IMR-90 (cell line): ENCODE measurements at regions of chr4 and their contacts with region 1.

Region 1: DNA sequence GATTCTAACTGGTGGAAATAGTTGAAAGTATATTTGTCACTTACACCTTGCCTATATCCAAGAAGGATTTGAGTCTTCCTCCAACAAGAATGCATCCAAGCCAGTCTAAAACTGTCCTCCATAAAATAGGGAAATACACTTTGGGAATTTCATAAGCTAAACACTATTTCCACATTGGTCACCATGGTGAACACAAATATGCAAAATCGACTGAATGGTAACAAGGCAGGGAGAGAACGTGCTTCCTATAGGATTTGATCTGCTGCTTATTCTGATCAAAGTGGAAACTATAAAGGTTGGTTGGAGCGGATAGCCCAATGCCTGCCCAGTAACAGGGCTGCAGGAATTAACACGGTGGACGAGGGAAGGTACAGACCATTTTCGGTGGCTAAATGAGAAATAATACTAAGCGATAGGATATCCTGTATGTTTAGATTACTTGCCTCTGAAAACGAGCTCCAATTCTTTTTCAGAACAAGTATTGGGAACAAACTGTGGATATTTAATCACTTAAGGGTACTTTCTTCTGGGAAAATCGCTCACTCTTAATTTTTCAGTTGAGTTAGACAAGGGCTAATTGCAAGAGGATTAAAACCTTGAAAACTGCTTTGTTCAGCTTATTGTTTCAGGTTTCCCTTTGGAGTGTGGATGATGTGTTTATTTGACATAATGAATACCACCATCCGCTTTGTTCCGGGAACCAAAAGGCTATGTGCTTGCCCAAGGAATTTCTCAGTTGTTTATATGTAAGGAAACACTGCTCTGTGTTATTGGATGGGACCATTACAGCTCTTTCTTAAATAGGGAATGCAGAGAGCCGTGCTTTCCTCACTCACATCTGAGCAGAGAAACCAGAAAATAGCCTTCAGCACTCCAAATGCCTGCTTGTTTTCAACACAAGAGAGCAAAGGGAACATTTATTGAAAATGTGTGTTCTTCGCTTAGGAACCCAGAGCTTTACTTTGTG is 194.4 kb downstream of the CBR4 start:
- DNase-seq: peak; percentile 87
- ATAC-seq: peak; percentile 69
- H3K4me3 ChIP-seq: peak overlapping the region; percentile 5; the same call in 1 of the 2 replicates
- H3K27ac ChIP-seq: peak overlapping the region; percentile 92
- H3K4me1 ChIP-seq: peaks cover 19% of the 10 kb centered on the region
- H3K27me3 ChIP-seq: no peaks in the 10 kb centered on the region
- CTCF ChIP-seq: no peak
- POLR2A ChIP-seq: peak; percentile 73
- RAD21 ChIP-seq: 0 out of 2 replicates have a peak, but pooled peaks have one; percentile 5

Region 2: DNA sequence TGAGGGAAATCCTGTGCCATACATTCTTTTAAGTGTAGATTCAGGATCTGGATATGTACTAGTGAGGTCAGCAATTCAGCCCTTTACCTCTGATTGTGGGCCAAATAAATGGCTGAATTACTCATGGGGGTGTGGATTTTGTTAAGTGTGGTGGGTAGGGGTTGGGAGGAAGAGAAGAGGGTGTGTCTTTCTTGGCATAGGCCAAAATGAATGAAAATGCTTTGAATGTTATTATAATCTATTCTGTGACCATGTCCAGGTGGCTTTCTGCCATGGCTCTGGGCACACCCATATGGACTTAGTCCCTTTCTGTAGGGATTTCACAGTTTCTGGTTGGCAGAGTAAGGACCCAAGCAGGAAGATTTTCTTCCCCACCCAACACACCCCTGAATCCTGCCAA is 49.9 kb before region 1 on chr4:
- CTCF ChIA-PET with region 1: no interaction called
- POLR2A ChIA-PET with region 1: no interaction called
- dilution Hi-C with region 1: no loop called
- in situ Hi-C with region 1: no loop called
- intact Hi-C with region 1: loop called (anchors 2 kb)
- DNase-seq: peak; percentile 38
- ATAC-seq: no peak
- H3K4me3 ChIP-seq: no peak overlapping the region
- H3K27ac ChIP-seq: no peak overlapping the region
- H3K4me1 ChIP-seq: peaks cover 24% of the 10 kb centered on the region
- H3K27me3 ChIP-seq: no peaks in the 10 kb centered on the region
- CTCF ChIP-seq: no peak
- POLR2A ChIP-seq: no peak
- RAD21 ChIP-seq: no peak

Region 3: GRCh38 chr4:168856312-168856711 is 40.6 kb after region 1 on chr4:
- CTCF ChIA-PET with region 1: interaction called, 7 read pairs
- POLR2A ChIA-PET with region 1: no interaction called
- dilution Hi-C with region 1: no loop called
- in situ Hi-C with region 1: no loop called
- intact Hi-C with region 1: loop called (anchors 1 kb)
- DNase-seq: peak; percentile 97
- ATAC-seq: peak; percentile 58
- H3K4me3 ChIP-seq: no peak overlapping the region
- H3K27ac ChIP-seq: peak overlapping the region; percentile 43; the same call in 1 of the 2 replicates
- H3K4me1 ChIP-seq: peaks cover 28% of the 10 kb centered on the region
- H3K27me3 ChIP-seq: no peaks in the 10 kb centered on the region
- CTCF ChIP-seq: no peak
- POLR2A ChIP-seq: no peak
- RAD21 ChIP-seq: no peak